Gastrocnemius medialis (tissue), 4 donors: ENCODE measurements at regions of chr15 and their contacts with region 1.

Region 1: GRCh38 chr15:85750319-85750806 is 44.4 kb downstream of the KLHL25 start:
- DNase-seq: peak; percentile 44 to 72
- ATAC-seq: peak; percentile 78 to 79
- H3K4me3 ChIP-seq: peak overlapping the region; percentile 35 to 45 (median 40)
- H3K27ac ChIP-seq: peak overlapping the region; percentile 80 to 84 (median 81)
- H3K4me1 ChIP-seq: peaks cover 38 to 41% of the 10 kb centered on the region in 2 donors
- H3K27me3 ChIP-seq: no peaks in the 10 kb centered on the region
- CTCF ChIP-seq: no peak
- POLR2A ChIP-seq: no peak

Region 2: GRCh38 chr15:85672332-85673084 is 77.9 kb before region 1 on chr15:
- in situ Hi-C with region 1: no loop called
- intact Hi-C with region 1: no loop called
- DNase-seq: peak in 1 of 2 donors; percentile 26
- ATAC-seq: peak; percentile 76 to 89
- H3K4me3 ChIP-seq: no peak overlapping the region
- H3K27ac ChIP-seq: peak overlapping the region; percentile 62 to 83 (median 75)
- H3K4me1 ChIP-seq: peaks cover 33 to 48% of the 10 kb centered on the region in 2 donors
- H3K27me3 ChIP-seq: no peaks in the 10 kb centered on the region
- CTCF ChIP-seq: no peak
- POLR2A ChIP-seq: no peak

Region 3: DNA sequence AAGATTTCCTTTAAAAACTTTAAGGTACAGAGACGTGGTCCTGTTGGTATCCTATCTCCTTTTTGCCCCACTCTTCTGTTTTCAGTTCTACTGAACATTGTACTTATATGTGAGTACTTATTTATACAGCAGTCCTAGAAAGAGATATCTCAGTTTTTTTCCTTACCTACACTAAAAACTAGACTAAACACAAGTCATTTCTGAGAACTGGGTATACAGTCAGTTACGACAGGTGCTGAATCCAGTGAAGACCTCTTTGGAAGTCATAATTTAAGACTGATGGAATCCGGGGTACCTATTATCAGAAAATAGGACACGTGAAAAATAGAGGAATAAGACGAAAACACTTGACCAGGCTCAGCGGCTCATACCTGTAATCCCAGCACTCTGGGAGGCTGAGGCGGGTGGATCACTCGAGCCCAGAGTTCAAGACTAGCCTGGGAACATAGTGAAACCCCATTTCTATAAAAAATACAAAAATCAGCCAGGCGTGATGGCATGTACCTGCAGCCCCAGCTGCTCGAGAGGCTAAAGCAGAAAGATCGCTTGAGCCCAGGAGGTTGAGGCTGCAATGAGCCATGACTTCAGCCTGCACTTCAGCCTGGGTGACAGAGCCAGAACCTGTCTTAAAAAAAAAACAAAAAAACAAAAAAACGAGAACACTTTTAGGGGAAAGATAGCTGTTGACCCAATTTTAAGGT is 31.9 kb before region 1 on chr15:
- in situ Hi-C with region 1: no loop called
- intact Hi-C with region 1: loop called (anchors 5 kb)
- DNase-seq: no peak
- ATAC-seq: no peak
- H3K4me3 ChIP-seq: no peak overlapping the region
- H3K27ac ChIP-seq: peak overlapping the region; percentile 12 to 39 (median 24)
- H3K4me1 ChIP-seq: no peaks in the 10 kb centered on the region
- H3K27me3 ChIP-seq: no peaks in the 10 kb centered on the region
- CTCF ChIP-seq: no peak
- POLR2A ChIP-seq: no peak